ENCODE measurements at regions of chr20 and their contacts with region 1.

Region 1: DNA sequence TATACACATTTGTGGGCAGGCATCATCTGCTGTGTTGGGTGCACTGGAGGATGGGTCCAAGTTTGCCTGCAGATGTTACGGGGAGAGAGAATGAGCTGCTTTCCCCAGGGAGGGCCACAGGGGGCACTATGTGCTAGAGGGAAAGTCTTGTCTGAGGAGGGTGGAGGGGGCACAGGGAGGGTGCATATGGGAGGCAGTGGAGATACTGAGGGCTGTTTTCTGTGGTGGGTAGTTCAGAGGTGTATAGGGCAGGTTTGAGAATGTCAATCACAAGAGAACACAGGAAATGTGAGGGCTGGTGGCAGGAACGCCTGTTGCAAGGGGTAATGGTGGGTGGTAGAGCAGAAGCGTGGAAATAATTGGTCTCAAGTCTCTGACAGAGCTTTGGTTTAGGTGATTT is 7.7 kb upstream of the PTPRA start:
- DNase-seq: peak; percentile 57 to 61
- ATAC-seq: peak; percentile 68 to 81 (median 76)
- H3K4me3 ChIP-seq: no peak overlapping the region
- H3K4me3 Mint-ChIP-seq: peak overlapping the region; percentile 82
- H3K27ac ChIP-seq: peak overlapping the region; percentile 63
- H3K27ac Mint-ChIP-seq: peak overlapping the region; percentile 89 to 97
- H3K4me1 ChIP-seq: peaks cover 55% of the 10 kb centered on the region
- H3K4me1 Mint-ChIP-seq: peaks cover 48 to 57% of the 10 kb centered on the region in 2 donors
- H3K27me3 ChIP-seq: no peaks in the 10 kb centered on the region
- H3K27me3 Mint-ChIP-seq: no peaks in the 10 kb centered on the region
- CTCF ChIP-seq: peak; percentile 55

Region 2: DNA sequence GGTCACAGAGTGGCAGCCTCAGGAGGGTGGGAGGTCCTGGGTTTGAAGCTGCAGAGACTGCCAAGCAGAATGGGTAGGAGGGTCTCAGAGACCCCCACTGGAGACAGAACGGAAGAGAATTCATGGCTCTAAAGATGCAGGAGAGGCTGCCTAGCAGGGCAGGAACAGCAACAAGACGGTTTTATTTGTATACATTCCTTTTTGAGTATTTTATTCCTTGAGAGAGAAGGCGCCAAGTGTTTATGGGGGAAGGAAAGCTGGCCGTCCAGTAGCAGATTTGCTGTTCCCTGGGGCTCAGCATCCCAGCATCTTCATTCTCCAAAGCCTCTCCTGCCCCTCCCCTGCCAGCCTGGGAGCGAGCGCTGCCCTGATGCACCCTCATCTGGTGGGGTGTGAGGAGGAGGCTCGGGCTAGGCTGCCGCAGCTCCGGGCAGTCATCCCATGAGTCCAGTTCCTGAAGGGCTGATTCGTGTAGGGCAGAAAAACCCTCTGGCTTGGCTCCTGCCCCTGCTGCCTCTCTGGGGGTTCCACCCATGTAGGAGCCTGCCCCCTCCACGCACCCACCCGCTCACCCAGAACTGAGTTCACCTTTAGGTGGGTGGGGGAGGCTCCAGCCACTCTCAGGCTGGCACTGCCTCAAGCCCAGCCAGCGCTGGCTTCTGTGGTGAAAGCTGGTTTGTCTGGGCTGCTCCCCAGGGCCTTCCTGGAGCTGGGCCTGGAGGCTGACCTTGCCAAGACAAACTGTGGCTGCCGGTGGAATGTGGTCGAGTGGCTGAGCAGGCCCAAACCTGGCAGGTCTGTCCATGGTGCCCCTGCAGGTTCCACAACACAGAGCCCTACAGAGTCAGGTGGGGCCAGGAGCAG is 97.6 kb before region 1 on chr20:
- intact Hi-C with region 1: no loop called
- DNase-seq: no peak
- ATAC-seq: no peak
- H3K4me3 ChIP-seq: no peak overlapping the region
- H3K4me3 Mint-ChIP-seq: no peak overlapping the region
- H3K27ac ChIP-seq: no peak overlapping the region
- H3K27ac Mint-ChIP-seq: no peak overlapping the region
- H3K4me1 ChIP-seq: peaks cover 16% of the 10 kb centered on the region
- H3K4me1 Mint-ChIP-seq: peaks cover 13 to 14% of the 10 kb centered on the region in 2 donors
- H3K27me3 ChIP-seq: peaks cover 3% of the 10 kb centered on the region
- H3K27me3 Mint-ChIP-seq: peaks cover 6 to 10% of the 10 kb centered on the region in 2 donors
- CTCF ChIP-seq: no peak

Region 3: GRCh38 chr20:2981662-2982061 is 116.0 kb after region 1 on chr20:
- intact Hi-C with region 1: loop called (anchors 1 kb)
- DNase-seq: no peak
- ATAC-seq: no peak
- H3K4me3 ChIP-seq: no peak overlapping the region
- H3K4me3 Mint-ChIP-seq: no peak overlapping the region
- H3K27ac ChIP-seq: no peak overlapping the region
- H3K27ac Mint-ChIP-seq: no peak overlapping the region
- H3K4me1 ChIP-seq: peaks cover 7% of the 10 kb centered on the region
- H3K4me1 Mint-ChIP-seq: peaks cover 7 to 24% of the 10 kb centered on the region in 2 donors
- H3K27me3 ChIP-seq: no peaks in the 10 kb centered on the region
- H3K27me3 Mint-ChIP-seq: no peaks in the 10 kb centered on the region
- CTCF ChIP-seq: no peak